Activated T-helper 1 cell treated with anti-CD3 and anti-CD28 coated beads, Interleukin-12 subunit alpha, Interleukin-12 subunit beta, Interleukin-2, Interleukin-4 antibody, amounts not matched to agents 30 ng/mL and 10 ng/mL and 1 ng/mL, durations not matched to agents 14 hours and 24 hours and 36 hours (primary cell): ENCODE measurements at regions of chr2 and their contacts with region 1.

Region 1: GRCh38 chr2:460861-461260 is 173.0 kb upstream of the ALKAL2 start:
- DNase-seq: peak; percentile 63
- H3K4me3 Mint-ChIP-seq: peak overlapping the region; percentile 39
- H3K27ac Mint-ChIP-seq: no peak overlapping the region
- H3K4me1 Mint-ChIP-seq: peaks cover 46% of the 10 kb centered on the region
- H3K27me3 Mint-ChIP-seq: peaks cover 51% of the 10 kb centered on the region

Region 2: DNA sequence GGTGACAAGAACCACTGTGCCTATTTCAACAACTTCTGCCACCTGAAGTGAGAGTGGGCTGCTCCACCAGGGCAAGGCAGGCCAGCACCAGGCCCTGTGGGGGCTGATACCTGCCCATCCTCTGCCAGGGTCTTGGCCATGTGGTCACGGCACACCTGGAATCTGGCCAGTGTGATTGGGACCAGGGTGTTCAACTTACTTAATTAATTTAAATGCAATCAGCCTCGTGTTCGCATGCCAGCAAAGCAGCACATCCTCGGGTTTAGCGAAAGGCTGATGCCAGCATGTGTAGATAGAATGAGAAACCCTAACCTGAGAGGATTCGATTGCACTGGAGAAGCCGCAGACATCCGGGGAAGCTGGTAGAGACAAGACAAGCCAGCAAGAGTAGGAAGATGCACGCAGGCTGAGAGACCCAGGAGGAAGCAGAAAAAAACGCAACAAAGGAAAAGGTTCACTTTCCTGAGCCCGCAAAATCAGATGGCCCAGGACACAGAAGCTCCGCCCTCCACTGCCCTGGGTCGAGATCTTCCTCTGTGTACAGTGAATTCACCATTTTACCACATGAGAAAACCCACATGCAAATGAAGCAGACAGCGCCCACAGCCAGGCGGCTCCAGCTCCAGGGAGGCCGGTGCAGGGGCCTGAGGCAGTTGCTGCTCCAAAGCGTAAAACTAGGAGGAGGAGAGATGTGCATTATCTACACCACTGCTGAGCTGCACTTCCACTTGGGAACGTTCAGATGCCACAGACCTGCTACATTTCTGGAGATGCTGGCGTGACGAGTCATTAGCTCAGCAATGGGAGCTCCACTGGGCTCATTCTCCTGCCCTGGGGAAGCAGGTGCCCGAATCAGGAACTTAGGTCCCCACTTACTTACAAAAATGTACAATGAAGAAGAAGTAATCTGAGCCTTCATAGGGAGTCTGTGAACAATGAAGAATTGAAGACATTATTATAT is 124.3 kb after region 1 on chr2:
- intact Hi-C with region 1: loop called (anchors 10 kb)
- DNase-seq: peak; percentile 20
- H3K4me3 Mint-ChIP-seq: peak overlapping the region; percentile 55
- H3K27ac Mint-ChIP-seq: no peak overlapping the region
- H3K4me1 Mint-ChIP-seq: peaks cover 12% of the 10 kb centered on the region
- H3K27me3 Mint-ChIP-seq: peaks cover 16% of the 10 kb centered on the region

Region 3: DNA sequence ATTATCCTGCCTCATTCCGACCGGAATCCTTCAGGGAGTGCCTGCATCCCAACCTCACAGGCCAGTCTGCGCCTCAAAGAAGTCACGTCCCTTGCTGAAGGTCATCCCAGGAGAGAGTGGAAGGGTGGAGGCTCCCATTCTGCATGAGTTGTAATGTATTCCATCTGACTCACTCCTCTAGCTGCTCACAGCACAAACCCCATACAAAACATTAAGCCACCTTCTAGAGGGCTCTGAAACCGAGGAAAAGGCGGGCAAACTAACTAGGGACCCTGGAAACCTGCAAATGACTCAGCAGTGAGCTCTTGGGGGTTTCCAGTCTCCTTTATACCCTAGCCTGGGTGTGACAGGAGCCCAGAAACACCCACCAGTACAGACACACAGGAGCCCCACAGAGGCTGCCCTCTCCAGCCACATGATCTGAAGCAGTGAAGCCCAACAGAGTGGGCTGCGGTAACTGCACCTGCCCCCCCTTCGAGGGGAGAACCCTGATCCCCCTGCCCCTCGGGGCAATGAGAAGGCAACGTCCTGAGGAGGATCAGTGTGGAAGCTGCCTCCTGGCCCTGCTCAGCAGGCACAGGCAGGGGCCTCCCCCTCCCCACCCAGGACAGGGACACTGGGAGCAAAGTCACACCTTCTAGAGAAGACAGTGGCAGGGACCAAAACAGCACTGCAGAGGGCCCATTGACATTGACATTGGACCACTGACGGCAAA is 420.5 kb after region 1 on chr2:
- intact Hi-C with region 1: no loop called
- DNase-seq: no peak
- H3K4me3 Mint-ChIP-seq: no peak overlapping the region
- H3K27ac Mint-ChIP-seq: no peak overlapping the region
- H3K4me1 Mint-ChIP-seq: no peaks in the 10 kb centered on the region
- H3K27me3 Mint-ChIP-seq: peaks cover 5% of the 10 kb centered on the region